Breast epithelium (tissue), 4 donors: ENCODE measurements at regions of chr1 and their contacts with region 1.

Region 1: GRCh38 chr1:84682047-84682446 is 8.2 kb downstream of the SSX2IP start:
- DNase-seq: no peak
- H3K4me3 ChIP-seq: no peak overlapping the region
- H3K27ac ChIP-seq: no peak overlapping the region
- H3K4me1 ChIP-seq: no peaks in the 10 kb centered on the region
- H3K27me3 ChIP-seq: no peaks in the 10 kb centered on the region
- CTCF ChIP-seq: no peak
- POLR2A ChIP-seq: no peak

Region 2: DNA sequence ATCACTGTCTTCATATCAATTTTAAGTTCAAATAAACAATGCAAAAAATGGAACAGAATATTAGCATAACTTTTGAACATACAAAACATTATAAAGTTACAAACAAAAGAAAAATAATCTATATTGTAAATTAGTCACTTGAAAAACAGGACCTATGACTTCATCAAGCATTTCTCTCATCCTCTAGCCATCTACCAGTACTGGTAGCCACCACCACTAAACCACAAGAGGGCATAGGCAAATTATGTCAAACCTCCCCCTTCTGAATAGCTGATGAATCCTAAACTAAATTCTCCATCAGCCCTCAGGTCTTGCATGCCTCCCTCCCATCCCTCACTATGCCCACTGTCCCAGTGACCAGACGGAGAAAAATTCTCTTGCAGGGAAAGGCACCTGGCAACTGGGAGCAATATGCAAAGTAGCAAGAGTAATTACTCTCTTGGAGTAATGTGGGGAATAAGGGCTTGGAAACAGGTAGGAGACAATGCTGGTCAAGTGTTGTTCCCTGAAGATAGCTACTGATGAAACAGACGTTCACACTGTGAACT is 28.8 kb before region 1 on chr1:
- intact Hi-C with region 1: no loop called
- DNase-seq: no peak
- H3K4me3 ChIP-seq: no peak overlapping the region
- H3K27ac ChIP-seq: no peak overlapping the region
- H3K4me1 ChIP-seq: no peaks in the 10 kb centered on the region
- H3K27me3 ChIP-seq: no peaks in the 10 kb centered on the region
- CTCF ChIP-seq: no peak
- POLR2A ChIP-seq: no peak

Region 3: DNA sequence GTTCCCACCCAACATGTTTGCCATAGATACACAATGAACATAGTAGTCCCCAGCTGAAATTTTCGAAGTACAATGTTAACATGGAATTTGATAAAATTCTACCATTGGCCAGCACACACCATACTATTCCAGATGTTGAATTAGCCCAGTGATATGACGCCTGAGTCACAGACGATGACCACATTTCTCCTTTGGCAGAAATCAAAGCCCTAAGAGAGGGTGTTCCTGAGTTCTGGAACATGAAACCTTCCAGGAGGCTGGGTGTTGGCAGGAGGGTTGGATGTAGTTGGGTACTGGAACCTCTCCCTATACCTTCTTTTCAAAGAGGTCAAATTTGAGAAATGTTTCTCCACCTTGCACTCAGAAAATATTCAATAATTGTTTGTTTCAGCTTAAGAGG is 173.1 kb after region 1 on chr1:
- intact Hi-C with region 1: loop called (anchors 5 kb)
- DNase-seq: no peak
- H3K4me3 ChIP-seq: no peak overlapping the region
- H3K27ac ChIP-seq: no peak overlapping the region
- H3K4me1 ChIP-seq: no peaks in the 10 kb centered on the region
- H3K27me3 ChIP-seq: no peaks in the 10 kb centered on the region
- CTCF ChIP-seq: no peak
- POLR2A ChIP-seq: no peak